ENCODE measurements at regions of chr9 and their contacts with region 1.

Region 1: DNA sequence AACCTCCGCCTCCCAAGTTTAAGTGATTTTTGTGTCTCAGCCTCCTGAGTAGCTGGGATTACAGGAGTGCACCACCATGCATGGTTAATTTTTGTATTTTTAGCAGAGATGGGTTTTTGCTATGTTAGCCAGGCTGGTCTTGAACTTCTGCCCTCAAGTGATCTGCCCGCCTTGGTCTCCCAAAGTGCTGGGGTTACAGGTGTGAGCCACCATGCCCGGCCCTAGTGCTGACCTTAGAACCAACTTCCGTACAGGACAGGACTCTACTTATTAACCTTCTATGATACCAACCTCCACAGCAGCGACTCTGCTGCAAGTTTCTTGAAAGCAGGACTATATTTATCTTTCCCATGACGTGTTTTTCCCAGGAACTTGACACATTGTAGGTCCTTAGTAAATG is 176.9 kb downstream of the RGS3 start:
- DNase-seq: peak in 1 of 5 donors; percentile 3
- ATAC-seq: no peak
- H3K4me3 ChIP-seq: no peak overlapping the region
- H3K27ac ChIP-seq: no peak overlapping the region
- H3K4me1 ChIP-seq: peaks cover 0 to 8% (median 0%) of the 10 kb centered on the region in 12 donors
- H3K27me3 ChIP-seq: no peaks in the 10 kb centered on the region
- CTCF ChIP-seq: no peak
- POLR2A ChIP-seq: no peak

Region 2: GRCh38 chr9:113626735-113627495 is 13.5 kb before region 1 on chr9:
- intact Hi-C with region 1: loop called in 1 of 10 experiments (anchors 2 kb)
- DNase-seq: peak; percentile 54 to 69 (median 68)
- ATAC-seq: peak; percentile 38 to 73 (median 61)
- H3K4me3 ChIP-seq: no peak overlapping the region
- H3K27ac ChIP-seq: peak overlapping the region in 9 of 12 donors; percentile 18 to 74 (median 65)
- H3K4me1 ChIP-seq: peaks cover 0 to 52% (median 32%) of the 10 kb centered on the region in 12 donors
- H3K27me3 ChIP-seq: no peaks in the 10 kb centered on the region
- CTCF ChIP-seq: no peak
- POLR2A ChIP-seq: no peak